Thyroid gland (tissue), 4 donors: ENCODE measurements at regions of chr12 and their contacts with region 1.

Region 1: DNA sequence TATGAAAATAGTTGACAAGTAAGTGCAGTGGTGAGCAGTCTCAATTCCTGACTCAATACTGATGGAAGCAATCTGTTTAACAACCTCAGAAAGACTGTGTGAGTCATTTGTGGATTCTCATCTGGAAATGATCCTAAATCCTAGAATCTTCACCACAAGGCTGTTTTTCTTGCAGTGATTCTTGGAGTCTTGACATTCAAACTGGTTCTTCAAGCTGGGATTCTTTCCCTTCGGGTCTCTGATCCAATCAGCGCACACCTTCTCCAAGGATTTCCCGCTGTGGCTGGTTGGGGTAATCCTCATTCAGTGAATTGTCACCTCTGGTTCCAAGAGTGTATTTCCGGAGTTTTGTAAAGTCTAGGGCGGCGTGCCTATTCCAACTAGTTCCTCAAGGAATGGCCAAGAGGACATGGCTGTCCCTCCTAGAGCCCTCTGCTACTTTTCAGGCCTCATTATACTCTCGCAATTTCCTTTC is 37.7 kb upstream of the FOXJ2 start:
- DNase-seq: no peak
- H3K4me3 ChIP-seq: no peak overlapping the region
- H3K27ac ChIP-seq: no peak overlapping the region
- H3K4me1 ChIP-seq: peaks cover 0 to 5% of the 10 kb centered on the region in 2 donors
- H3K27me3 ChIP-seq: no peaks in the 10 kb centered on the region
- CTCF ChIP-seq: no peak
- POLR2A ChIP-seq: no peak

Region 2: DNA sequence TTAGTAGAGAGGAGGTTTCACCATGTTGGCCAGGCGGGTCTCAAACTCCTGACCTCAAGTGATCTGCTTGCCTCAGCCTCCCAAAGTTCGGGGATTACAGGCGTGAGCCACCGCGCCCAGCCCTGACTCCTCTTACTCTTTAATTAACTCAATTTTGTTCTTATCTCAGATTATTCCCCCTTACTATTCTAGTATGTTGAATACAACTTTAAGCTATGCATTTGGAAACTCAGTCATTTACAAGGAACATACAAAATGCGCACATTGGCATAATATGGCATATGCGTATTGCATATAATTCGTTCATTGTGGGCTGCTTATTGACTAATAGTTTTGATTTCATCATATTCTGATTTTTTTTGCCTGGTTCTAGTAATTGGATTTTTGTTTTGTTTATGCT is 480.4 kb before region 1 on chr12:
- intact Hi-C with region 1: no loop called
- DNase-seq: no peak
- H3K4me3 ChIP-seq: no peak overlapping the region
- H3K27ac ChIP-seq: no peak overlapping the region
- H3K4me1 ChIP-seq: no peaks in the 10 kb centered on the region
- H3K27me3 ChIP-seq: no peaks in the 10 kb centered on the region
- CTCF ChIP-seq: no peak
- POLR2A ChIP-seq: no peak

Region 3: GRCh38 chr12:7859552-7859951 is 135.2 kb before region 1 on chr12:
- intact Hi-C with region 1: loop called (anchors 5 kb)
- DNase-seq: no peak
- H3K4me3 ChIP-seq: no peak overlapping the region
- H3K27ac ChIP-seq: no peak overlapping the region
- H3K4me1 ChIP-seq: no peaks in the 10 kb centered on the region
- H3K27me3 ChIP-seq: no peaks in the 10 kb centered on the region
- CTCF ChIP-seq: no peak
- POLR2A ChIP-seq: no peak

Region 4: GRCh38 chr12:7933255-7933729 is 61.5 kb before region 1 on chr12:
- intact Hi-C with region 1: loop called (anchors 5 kb)
- DNase-seq: peak; percentile 56 to 58
- H3K4me3 ChIP-seq: peak overlapping the region in 1 of 3 donors; percentile 37
- H3K27ac ChIP-seq: peak overlapping the region; percentile 5 to 83 (median 81)
- H3K4me1 ChIP-seq: peaks cover 4 to 12% of the 10 kb centered on the region in 2 donors
- H3K27me3 ChIP-seq: no peaks in the 10 kb centered on the region
- CTCF ChIP-seq: peak; percentile 14 to 77 (median 60)
- POLR2A ChIP-seq: peak in 1 of 2 donors; percentile 36

Region 5: DNA sequence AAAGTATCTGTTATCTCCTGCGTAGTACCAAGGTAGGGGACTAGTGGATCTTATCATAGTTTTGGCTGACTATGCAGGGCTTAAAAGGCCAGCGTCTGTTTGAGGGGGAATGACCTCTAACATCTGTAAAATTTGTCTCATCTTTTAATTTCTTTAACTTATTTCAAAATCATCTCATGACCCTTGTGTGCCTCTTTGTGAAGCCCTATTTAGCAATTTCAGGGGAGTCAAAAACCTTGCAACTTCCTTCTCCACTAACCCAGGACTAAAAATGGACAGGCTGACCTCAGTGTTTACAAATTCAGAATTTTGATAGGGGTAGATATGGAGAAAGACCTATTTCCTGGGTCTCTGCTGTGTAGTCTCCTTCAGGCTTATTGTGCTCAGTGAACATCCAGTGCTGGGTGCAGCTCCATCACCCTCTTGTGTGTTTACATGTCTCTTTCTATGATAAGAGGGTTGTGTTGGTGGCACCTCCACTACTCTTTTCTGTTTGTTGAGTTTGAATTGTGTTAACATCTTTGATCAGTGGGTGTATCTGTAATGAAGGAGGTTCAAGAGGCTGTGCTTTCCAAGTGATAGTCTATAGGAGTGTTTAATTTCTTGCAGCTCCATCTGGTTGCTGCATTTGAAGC is 101.6 kb after region 1 on chr12:
- intact Hi-C with region 1: no loop called
- DNase-seq: no peak
- H3K4me3 ChIP-seq: no peak overlapping the region
- H3K27ac ChIP-seq: no peak overlapping the region
- H3K4me1 ChIP-seq: no peaks in the 10 kb centered on the region
- H3K27me3 ChIP-seq: no peaks in the 10 kb centered on the region
- CTCF ChIP-seq: no peak
- POLR2A ChIP-seq: no peak